CD8-positive, alpha-beta T cell (primary cell): ENCODE measurements at regions of chr11 and their contacts with region 1.

Region 1: DNA sequence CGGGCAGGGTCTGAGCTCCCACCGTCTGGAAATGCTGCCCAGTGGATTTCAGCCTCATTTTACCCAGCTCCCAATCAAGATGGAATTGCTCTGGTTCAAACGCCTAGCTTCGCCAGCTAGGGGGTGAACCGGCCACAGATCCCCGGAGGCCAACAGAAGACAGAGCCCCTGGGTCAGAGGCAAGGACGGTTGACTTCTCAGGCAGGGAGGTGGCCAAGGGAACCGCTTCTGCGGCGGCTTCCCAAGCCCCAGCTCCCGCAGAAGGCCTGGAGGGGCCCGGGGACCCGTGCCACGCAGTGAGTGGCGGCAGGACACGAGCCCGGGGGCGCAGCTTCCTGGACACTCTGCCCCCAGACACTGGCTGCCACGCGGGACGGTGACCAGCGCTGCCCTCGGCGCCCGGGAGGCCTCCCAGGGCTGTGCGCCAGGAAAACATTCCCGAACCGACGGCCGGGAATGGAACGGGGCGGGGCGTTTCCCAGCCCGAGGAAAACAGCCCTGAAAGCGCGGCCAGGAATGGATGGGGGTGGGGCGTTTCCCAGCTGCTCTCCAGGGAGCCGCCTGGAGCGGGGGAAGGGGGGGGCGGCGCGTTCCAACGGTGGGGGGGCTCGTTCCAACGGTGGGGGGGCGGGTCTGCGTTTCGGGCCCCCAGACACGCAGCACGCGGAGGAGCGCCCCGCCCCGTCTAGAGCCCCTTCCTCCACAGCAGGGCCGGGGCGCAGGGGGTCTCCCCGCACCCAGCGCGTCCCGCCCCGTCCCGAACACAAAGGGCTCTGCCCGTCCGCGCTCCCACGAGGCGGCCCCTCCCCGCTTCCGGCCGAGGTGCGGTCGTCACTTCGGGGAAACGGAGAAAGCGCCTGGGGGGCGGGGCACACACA is 13.5 kb upstream of the B4GALNT4 start:
- DNase-seq: peak; percentile 64 to 94 (median 85)
- ATAC-seq: peak; percentile 61
- H3K4me3 ChIP-seq: peak overlapping the region; percentile 32 to 66
- H3K4me3 Mint-ChIP-seq: peak overlapping the region; percentile 84
- H3K27ac ChIP-seq: peak overlapping the region; percentile 76 to 86
- H3K27ac Mint-ChIP-seq: peak overlapping the region; percentile 95
- H3K4me1 ChIP-seq: peaks cover 43% of the 10 kb centered on the region
- H3K4me1 Mint-ChIP-seq: peaks cover 44% of the 10 kb centered on the region
- H3K27me3 ChIP-seq: no peaks in the 10 kb centered on the region
- H3K27me3 Mint-ChIP-seq: no peaks in the 10 kb centered on the region
- CTCF ChIP-seq: no peak

Region 2: GRCh38 chr11:269146-269890 is 86.5 kb before region 1 on chr11:
- CTCF ChIA-PET with region 1: no interaction called
- POLR2A ChIA-PET with region 1: interaction called, 11 read pairs
- intact Hi-C with region 1: loop called in 1 of 2 experiments (anchors 1 kb)
- DNase-seq: peak in 5 of 9 experiments; percentile 60 to 90 (median 77)
- ATAC-seq: peak; percentile 69
- H3K4me3 ChIP-seq: peak overlapping the region; percentile 38 to 60
- H3K4me3 Mint-ChIP-seq: peak overlapping the region; percentile 85
- H3K27ac ChIP-seq: peak overlapping the region; percentile 76 to 96
- H3K27ac Mint-ChIP-seq: peak overlapping the region; percentile 98
- H3K4me1 ChIP-seq: peaks cover 23% of the 10 kb centered on the region
- H3K4me1 Mint-ChIP-seq: peaks cover 30% of the 10 kb centered on the region
- H3K27me3 ChIP-seq: no peaks in the 10 kb centered on the region
- H3K27me3 Mint-ChIP-seq: no peaks in the 10 kb centered on the region
- CTCF ChIP-seq: no peak

Region 3: GRCh38 chr11:279966-280582 is 75.7 kb before region 1 on chr11:
- CTCF ChIA-PET with region 1: interaction called, 8 read pairs
- POLR2A ChIA-PET with region 1: interaction called, 20 read pairs
- intact Hi-C with region 1: no loop called
- DNase-seq: peak in 6 of 9 experiments; percentile 60 to 77 (median 67)
- ATAC-seq: peak; percentile 62
- H3K4me3 ChIP-seq: peak overlapping the region; percentile 56 to 70
- H3K4me3 Mint-ChIP-seq: peak overlapping the region; percentile 89
- H3K27ac ChIP-seq: peak overlapping the region in 1 of 2 experiments; percentile 57
- H3K27ac Mint-ChIP-seq: peak overlapping the region; percentile 89
- H3K4me1 ChIP-seq: peaks cover 49% of the 10 kb centered on the region
- H3K4me1 Mint-ChIP-seq: peaks cover 55% of the 10 kb centered on the region
- H3K27me3 ChIP-seq: peaks cover 0 to 11% of the 10 kb centered on the region in 2 experiments
- H3K27me3 Mint-ChIP-seq: no peaks in the 10 kb centered on the region
- CTCF ChIP-seq: no peak

Region 4: GRCh38 chr11:313787-314547 is 41.9 kb before region 1 on chr11 and contains the start of gene IFITM1:
- CTCF ChIA-PET with region 1: interaction called, 35 read pairs
- POLR2A ChIA-PET with region 1: interaction called, 22 read pairs
- intact Hi-C with region 1: loop called (anchors 1 to 2 kb)
- DNase-seq: peak in 7 of 9 experiments; percentile 54 to 86 (median 71)
- ATAC-seq: peak; percentile 49
- H3K4me3 ChIP-seq: peak within 1 kb of the TSS; percentile 95 to 97
- H3K4me3 Mint-ChIP-seq: peak within 1 kb of the TSS; percentile 95
- H3K27ac ChIP-seq: peak within 1 kb of the TSS; percentile 83 to 88
- H3K27ac Mint-ChIP-seq: peak within 1 kb of the TSS; percentile 98
- H3K4me1 ChIP-seq: peaks cover 18% of the 10 kb centered on the region
- H3K4me1 Mint-ChIP-seq: peaks cover 45% of the 10 kb centered on the region
- H3K27me3 ChIP-seq: no peaks in the 10 kb centered on the region
- H3K27me3 Mint-ChIP-seq: no peaks in the 10 kb centered on the region
- CTCF ChIP-seq: no peak
- total RNA-seq, gene IFITM1: 223 to 251 TPM

Region 5: DNA sequence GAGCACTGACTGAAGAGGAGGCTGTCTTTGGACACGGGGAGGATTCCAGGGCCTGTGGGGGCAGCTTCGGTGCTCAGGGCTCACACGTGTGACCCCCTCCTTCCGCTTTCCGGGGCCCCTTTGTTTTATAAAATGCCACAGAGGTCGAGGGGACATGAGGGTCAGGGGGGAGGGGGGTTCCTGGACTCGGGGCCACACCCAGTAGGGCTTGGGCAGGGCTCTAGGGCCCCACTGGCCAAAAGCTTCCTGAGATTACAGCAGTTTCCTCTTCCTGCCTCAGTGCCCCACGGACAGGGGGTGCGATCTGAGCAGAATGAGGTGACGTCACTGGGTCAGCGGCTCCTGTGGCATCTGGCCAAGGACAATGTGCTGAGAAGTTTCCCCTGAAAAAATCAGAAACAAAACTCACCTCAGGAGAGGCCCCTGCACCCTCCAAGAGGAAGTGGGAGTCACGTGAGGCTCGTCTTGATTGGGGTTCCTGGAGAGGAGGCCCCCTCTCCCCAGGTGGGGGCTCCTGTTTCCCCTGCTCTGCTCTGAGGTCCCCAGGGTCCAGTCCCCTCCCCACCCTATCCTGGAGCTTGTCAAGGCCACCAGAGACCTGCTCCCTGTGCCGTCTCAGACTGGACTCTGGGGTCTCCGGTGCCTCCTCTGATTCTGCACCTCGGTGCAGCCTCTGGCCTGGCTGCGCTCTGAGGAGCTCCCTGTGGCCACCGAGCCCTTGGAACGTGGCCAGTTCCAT is 28.8 kb before region 1 on chr11:
- CTCF ChIA-PET with region 1: interaction called, 5 read pairs
- POLR2A ChIA-PET with region 1: interaction called, 3 read pairs
- intact Hi-C with region 1: loop called in 1 of 2 experiments (anchors 2 kb)
- DNase-seq: peak in 8 of 9 experiments; percentile 42 to 93 (median 77)
- ATAC-seq: peak; percentile 62
- H3K4me3 ChIP-seq: peak overlapping the region; percentile 6 to 9
- H3K4me3 Mint-ChIP-seq: peak overlapping the region; percentile 67
- H3K27ac ChIP-seq: peak overlapping the region; percentile 69 to 81
- H3K27ac Mint-ChIP-seq: peak overlapping the region; percentile 95
- H3K4me1 ChIP-seq: peaks cover 85% of the 10 kb centered on the region
- H3K4me1 Mint-ChIP-seq: peaks cover 76% of the 10 kb centered on the region
- H3K27me3 ChIP-seq: no peaks in the 10 kb centered on the region
- H3K27me3 Mint-ChIP-seq: no peaks in the 10 kb centered on the region
- CTCF ChIP-seq: no peak

Region 6: DNA sequence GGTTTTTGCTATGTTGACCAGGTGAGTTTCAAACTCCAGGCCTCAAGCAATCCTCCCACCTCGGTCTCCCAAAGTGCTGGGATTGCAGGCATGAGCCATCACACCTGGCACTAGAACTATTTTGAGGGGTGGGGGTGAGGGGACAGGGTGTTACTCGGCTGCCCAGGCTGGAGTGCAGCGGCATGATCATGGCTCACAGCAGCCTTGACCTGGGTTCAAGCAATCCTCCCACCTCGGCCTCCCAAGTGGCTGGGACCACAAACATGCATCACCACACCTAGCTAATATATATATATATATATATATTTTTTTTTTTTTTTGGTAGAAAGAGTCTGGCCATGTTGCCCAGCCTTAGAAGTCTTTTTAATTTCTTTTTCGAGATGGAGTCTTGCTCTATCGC is 18.1 kb before region 1 on chr11:
- CTCF ChIA-PET with region 1: interaction called, 17 read pairs
- POLR2A ChIA-PET with region 1: no interaction called
- intact Hi-C with region 1: no loop called
- DNase-seq: no peak
- ATAC-seq: no peak
- H3K4me3 ChIP-seq: no peak overlapping the region
- H3K4me3 Mint-ChIP-seq: no peak overlapping the region
- H3K27ac ChIP-seq: no peak overlapping the region
- H3K27ac Mint-ChIP-seq: no peak overlapping the region
- H3K4me1 ChIP-seq: peaks cover 39% of the 10 kb centered on the region
- H3K4me1 Mint-ChIP-seq: peaks cover 36% of the 10 kb centered on the region
- H3K27me3 ChIP-seq: no peaks in the 10 kb centered on the region
- H3K27me3 Mint-ChIP-seq: no peaks in the 10 kb centered on the region
- CTCF ChIP-seq: no peak